Mammary epithelial cell (primary cell): ENCODE measurements at regions of chr22 and their contacts with region 1.

Region 1: GRCh38 chr22:39319270-39320022 is at the start of gene RPL3:
- DNase-seq: peak; percentile 96
- H3K4me3 ChIP-seq: peak within 1 kb of the TSS; percentile 74 to 97 (median 87)
- H3K27ac ChIP-seq: peak within 1 kb of the TSS; percentile 92
- H3K4me1 ChIP-seq: peaks cover 20% of the 10 kb centered on the region
- H3K27me3 ChIP-seq: no peaks in the 10 kb centered on the region
- CTCF ChIP-seq: no peak
- total RNA-seq, gene RPL3: 1,970 to 2,165 TPM

Region 2: GRCh38 chr22:38755911-38756532 is 563.4 kb before region 1 on chr22 and contains the start of gene SUN2:
- CTCF ChIA-PET with region 1: no interaction called
- dilution Hi-C with region 1: no loop called
- in situ Hi-C with region 1: loop called in 1 of 2 experiments (anchors 25 kb)
- intact Hi-C with region 1: loop called (anchors 10 kb)
- DNase-seq: peak; percentile 74
- H3K4me3 ChIP-seq: peak within 1 kb of the TSS; percentile 45 to 70 (median 55)
- H3K27ac ChIP-seq: peak within 1 kb of the TSS; percentile 37
- H3K4me1 ChIP-seq: peaks cover 35% of the 10 kb centered on the region
- H3K27me3 ChIP-seq: no peaks in the 10 kb centered on the region
- CTCF ChIP-seq: no peak
- total RNA-seq, gene SUN2: 70.3 to 106 TPM

Region 3: GRCh38 chr22:39123751-39124601 is 195.5 kb before region 1 on chr22:
- CTCF ChIA-PET with region 1: no interaction called
- dilution Hi-C with region 1: loop called (anchors 5 kb)
- in situ Hi-C with region 1: no loop called
- intact Hi-C with region 1: no loop called
- DNase-seq: no peak
- H3K4me3 ChIP-seq: no peak overlapping the region
- H3K27ac ChIP-seq: no peak overlapping the region
- H3K4me1 ChIP-seq: no peaks in the 10 kb centered on the region
- H3K27me3 ChIP-seq: no peaks in the 10 kb centered on the region
- CTCF ChIP-seq: no peak

Region 4: GRCh38 chr22:39183991-39184585 is 135.4 kb before region 1 on chr22:
- CTCF ChIA-PET with region 1: no interaction called
- dilution Hi-C with region 1: loop called (anchors 5 kb)
- in situ Hi-C with region 1: no loop called
- intact Hi-C with region 1: no loop called
- DNase-seq: no peak
- H3K4me3 ChIP-seq: no peak overlapping the region
- H3K27ac ChIP-seq: no peak overlapping the region
- H3K4me1 ChIP-seq: peaks cover 9% of the 10 kb centered on the region
- H3K27me3 ChIP-seq: no peaks in the 10 kb centered on the region
- CTCF ChIP-seq: no peak

Region 5: GRCh38 chr22:39220897-39221850 is 98.3 kb before region 1 on chr22:
- CTCF ChIA-PET with region 1: no interaction called
- dilution Hi-C with region 1: no loop called
- in situ Hi-C with region 1: no loop called
- intact Hi-C with region 1: no loop called
- DNase-seq: peak; percentile 66
- H3K4me3 ChIP-seq: no peak overlapping the region
- H3K27ac ChIP-seq: no peak overlapping the region
- H3K4me1 ChIP-seq: peaks cover 10% of the 10 kb centered on the region
- H3K27me3 ChIP-seq: no peaks in the 10 kb centered on the region
- CTCF ChIP-seq: no peak

Region 6: GRCh38 chr22:39283322-39284004 is 36.0 kb before region 1 on chr22:
- CTCF ChIA-PET with region 1: no interaction called
- dilution Hi-C with region 1: no loop called
- in situ Hi-C with region 1: no loop called
- intact Hi-C with region 1: no loop called
- DNase-seq: peak; percentile 52
- H3K4me3 ChIP-seq: no peak overlapping the region
- H3K27ac ChIP-seq: peak overlapping the region; percentile 11
- H3K4me1 ChIP-seq: peaks cover 21% of the 10 kb centered on the region
- H3K27me3 ChIP-seq: no peaks in the 10 kb centered on the region
- CTCF ChIP-seq: no peak

Region 7: GRCh38 chr22:39520054-39520891 is 200.8 kb after region 1 on chr22 and contains the start of gene ATF4:
- CTCF ChIA-PET with region 1: interaction called, 10 read pairs
- dilution Hi-C with region 1: no loop called
- in situ Hi-C with region 1: no loop called
- intact Hi-C with region 1: loop called (anchors 1 kb)
- DNase-seq: peak; percentile 99
- H3K4me3 ChIP-seq: peak within 1 kb of the TSS; percentile 77 to 96 (median 93)
- H3K27ac ChIP-seq: peak within 1 kb of the TSS; percentile 82
- H3K4me1 ChIP-seq: peaks cover 16% of the 10 kb centered on the region
- H3K27me3 ChIP-seq: no peaks in the 10 kb centered on the region
- CTCF ChIP-seq: no peak
- total RNA-seq, gene ATF4: 598 to 653 TPM